BJ (cell line): ENCODE measurements at regions of chr6 and their contacts with region 1.

Region 1: DNA sequence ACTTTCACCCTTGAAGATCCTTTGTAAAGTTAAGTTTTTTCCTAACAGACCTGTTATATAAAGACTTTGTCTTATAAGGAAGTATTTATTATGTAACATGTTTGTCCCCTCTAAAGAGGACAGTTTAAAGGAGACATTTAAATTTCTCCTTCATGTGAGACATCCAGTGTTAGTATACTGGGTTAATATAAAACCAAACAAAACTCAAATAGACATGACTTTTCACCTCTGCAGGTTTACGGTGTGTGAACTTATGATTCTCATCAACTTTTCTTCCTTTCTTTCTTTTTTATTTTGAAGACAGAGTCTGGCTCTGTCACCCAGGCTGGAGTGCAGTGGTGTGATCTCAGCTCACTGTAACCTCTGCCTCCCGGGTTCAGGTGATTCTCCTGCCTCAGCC is 17.4 kb upstream of the MPC1 start:
- DNase-seq: no peak
- H3K4me3 ChIP-seq: no peak overlapping the region
- H3K27me3 ChIP-seq: peaks cover 5% of the 10 kb centered on the region; the same call in 1 of the 2 replicates
- CTCF ChIP-seq: no peak

Region 2: GRCh38 chr6:166228839-166229528 is 171.2 kb before region 1 on chr6:
- CTCF ChIA-PET with region 1: no interaction called
- POLR2A ChIA-PET with region 1: no interaction called
- DNase-seq: no peak
- H3K4me3 ChIP-seq: no peak overlapping the region
- H3K27me3 ChIP-seq: no peaks in the 10 kb centered on the region
- CTCF ChIP-seq: no peak

Region 3: DNA sequence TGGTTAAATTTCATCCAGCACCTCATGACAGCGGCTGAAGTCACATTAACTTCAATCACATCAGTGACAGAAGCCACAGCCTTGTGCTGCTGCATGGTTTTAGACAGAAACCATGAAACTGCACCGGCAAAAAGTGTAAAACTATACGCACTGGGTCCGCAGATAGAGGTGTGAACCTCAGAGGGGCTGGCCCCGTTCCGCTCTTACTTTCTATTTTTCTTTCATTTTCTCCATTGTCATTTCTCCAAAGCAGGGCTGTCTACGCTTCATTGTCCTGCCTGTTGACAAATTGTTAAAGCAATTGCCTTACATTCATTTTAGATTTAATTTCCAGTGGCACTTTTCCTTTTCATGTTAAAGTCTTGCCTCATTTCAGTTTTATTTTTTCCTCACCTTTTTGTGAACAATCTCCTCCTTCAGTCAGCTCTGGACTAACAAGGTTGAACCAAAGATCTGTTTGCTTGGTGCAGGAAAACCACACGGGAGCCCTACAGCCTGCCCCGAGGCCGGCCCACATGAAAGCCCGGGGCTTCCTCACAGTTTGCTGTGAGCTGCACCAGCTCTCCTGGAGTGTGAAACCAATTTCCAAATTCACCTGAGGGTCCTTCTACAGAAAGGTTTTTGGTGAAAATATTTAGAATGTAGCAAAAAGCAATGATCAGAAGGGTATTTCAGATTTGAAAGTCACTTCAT is 155.7 kb before region 1 on chr6:
- CTCF ChIA-PET with region 1: no interaction called
- POLR2A ChIA-PET with region 1: no interaction called
- DNase-seq: no peak
- H3K4me3 ChIP-seq: no peak overlapping the region
- H3K27me3 ChIP-seq: no peaks in the 10 kb centered on the region
- CTCF ChIP-seq: no peak

Region 4: DNA sequence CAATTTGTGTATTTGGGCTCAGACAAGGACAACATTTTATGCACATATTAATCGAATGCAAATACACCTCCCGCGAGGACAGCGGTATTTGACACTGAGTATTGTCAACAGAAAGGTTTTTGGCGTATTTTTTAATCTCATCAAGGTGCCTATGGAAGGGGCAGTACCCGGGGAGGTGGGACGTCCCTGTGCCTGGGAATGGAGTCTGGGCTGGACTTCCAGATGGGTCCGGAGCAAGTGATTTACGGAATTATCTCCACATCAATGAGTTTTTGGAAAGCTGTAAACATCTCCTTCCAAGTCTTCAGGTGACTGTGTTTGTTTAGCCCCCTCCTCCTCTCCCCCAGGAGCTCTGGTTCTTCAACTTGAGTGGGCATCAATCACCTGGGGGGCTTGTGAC is 131.8 kb before region 1 on chr6:
- CTCF ChIA-PET with region 1: interaction called, 10 read pairs
- POLR2A ChIA-PET with region 1: no interaction called
- DNase-seq: no peak
- H3K4me3 ChIP-seq: no peak overlapping the region
- H3K27me3 ChIP-seq: no peaks in the 10 kb centered on the region
- CTCF ChIP-seq: no peak

Region 5: DNA sequence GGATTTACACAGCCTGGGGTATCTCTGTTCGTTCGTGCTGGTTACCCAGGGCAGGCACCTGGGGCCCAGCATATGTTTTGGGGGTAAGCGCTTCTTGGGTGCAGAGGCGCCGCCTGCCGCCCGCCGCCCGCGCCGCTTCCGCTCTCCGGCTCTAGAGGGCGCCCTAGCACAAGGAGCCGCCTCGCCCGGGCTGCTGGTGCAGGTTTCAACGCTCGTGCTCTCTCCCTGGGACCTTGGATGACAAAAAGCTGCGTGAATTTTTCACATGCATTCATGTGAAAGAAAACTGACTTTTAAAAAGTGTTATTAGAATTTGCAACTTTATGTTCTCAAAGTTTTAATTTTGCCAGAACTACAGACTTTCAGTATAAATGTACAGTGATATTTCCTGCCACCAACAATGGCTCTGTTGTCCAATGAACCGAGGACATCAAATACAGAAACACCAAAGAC is 124.4 kb before region 1 on chr6:
- CTCF ChIA-PET with region 1: interaction called, 34 read pairs
- POLR2A ChIA-PET with region 1: no interaction called
- DNase-seq: no peak
- H3K4me3 ChIP-seq: no peak overlapping the region
- H3K27me3 ChIP-seq: no peaks in the 10 kb centered on the region; the same call in 1 of the 2 replicates
- CTCF ChIP-seq: peak; percentile 99

Region 6: DNA sequence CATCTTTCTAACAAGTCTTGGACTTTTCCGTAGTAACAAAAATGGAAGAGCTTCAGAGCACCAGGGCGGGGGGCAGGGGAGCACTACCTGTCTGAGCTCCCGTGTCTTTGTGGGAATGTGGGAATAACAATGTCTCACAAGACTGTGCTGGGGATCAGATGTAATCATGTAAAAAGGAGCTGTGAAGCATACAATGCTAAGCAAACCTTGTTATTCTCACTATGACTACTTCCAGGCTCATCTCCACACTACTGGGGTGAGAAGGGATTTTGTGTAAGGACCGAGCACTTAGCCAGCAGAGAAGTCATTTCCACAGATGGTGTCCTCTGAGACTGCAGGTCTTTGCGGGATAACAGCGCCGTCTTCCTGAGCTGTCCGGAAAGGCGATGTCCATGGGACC is 119.1 kb before region 1 on chr6:
- CTCF ChIA-PET with region 1: interaction called, 34 read pairs
- POLR2A ChIA-PET with region 1: no interaction called
- DNase-seq: no peak
- H3K4me3 ChIP-seq: no peak overlapping the region
- H3K27me3 ChIP-seq: peaks cover 3% of the 10 kb centered on the region; the same call in 1 of the 2 replicates
- CTCF ChIP-seq: no peak

Region 7: GRCh38 chr6:166313255-166314070 is 86.7 kb before region 1 on chr6:
- CTCF ChIA-PET with region 1: interaction called, 24 read pairs
- POLR2A ChIA-PET with region 1: no interaction called
- DNase-seq: no peak
- H3K4me3 ChIP-seq: no peak overlapping the region
- H3K27me3 ChIP-seq: peaks cover 9% of the 10 kb centered on the region
- CTCF ChIP-seq: peak; percentile 84

Region 8: GRCh38 chr6:166366921-166367320 is 33.3 kb before region 1 on chr6:
- CTCF ChIA-PET with region 1: no interaction called
- POLR2A ChIA-PET with region 1: no interaction called
- DNase-seq: no peak
- H3K4me3 ChIP-seq: no peak overlapping the region
- H3K27me3 ChIP-seq: no peaks in the 10 kb centered on the region
- CTCF ChIP-seq: no peak

Region 9: DNA sequence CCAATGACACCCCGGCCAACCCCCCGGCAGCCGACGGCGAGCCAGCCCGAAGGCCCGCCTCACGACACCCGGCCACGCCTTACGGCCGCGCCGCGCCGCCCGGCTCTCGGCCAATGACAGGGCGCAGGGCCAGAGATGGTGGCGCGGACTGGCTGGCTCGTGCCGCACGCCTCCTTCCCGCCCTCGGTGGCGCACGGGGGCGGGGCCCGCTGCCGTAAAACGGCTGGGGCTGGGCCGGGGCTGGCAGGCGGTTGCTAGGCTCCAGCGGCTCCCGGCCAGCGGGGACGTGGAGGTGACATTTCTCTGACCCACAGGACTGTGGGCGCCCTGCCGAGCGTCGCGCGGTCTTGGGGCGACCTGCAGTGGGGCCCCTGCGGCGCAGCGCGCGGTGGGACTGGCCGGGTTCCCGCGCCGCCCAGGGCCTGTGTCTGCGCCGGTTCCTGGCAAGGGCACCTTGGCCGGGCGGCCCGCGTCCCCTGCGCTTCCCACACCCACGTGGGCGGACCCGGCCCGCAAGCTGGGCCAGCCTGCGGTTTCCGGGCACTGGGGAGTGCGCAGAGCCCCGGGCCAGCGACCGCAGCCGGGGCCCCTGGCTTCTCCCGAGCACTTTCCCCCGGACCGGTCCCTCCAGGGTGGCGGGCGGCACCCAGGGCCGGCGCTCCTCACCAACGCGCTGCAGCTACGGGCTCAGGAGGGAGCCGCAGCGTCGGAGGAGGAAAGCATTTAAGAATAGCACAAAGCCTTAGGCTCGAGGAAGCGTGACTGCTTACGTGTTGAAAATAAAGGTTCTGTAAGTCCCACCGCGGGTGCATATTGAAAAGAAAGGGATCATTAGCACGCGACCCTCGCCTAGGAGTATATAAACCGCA is 17.0 kb before region 1 on chr6 and contains the start of gene MPC1:
- CTCF ChIA-PET with region 1: interaction called, 22 read pairs
- POLR2A ChIA-PET with region 1: no interaction called
- DNase-seq: peak; percentile 71
- H3K4me3 ChIP-seq: peak within 1 kb of the TSS; percentile 84
- H3K27me3 ChIP-seq: no peaks in the 10 kb centered on the region; the same call in 1 of the 2 replicates
- CTCF ChIP-seq: no peak
- polyA plus RNA-seq, gene MPC1: 19.2 and 27.5 TPM in 2 replicates